ENCODE measurements at regions of chr3 and their contacts with region 1.

Region 1: GRCh38 chr3:144556392-144556791 is 584.8 kb downstream of the DIPK2A start:
- DNase-seq: no peak
- H3K4me3 ChIP-seq: no peak overlapping the region
- H3K27ac ChIP-seq: no peak overlapping the region
- H3K4me1 ChIP-seq: no peaks in the 10 kb centered on the region
- H3K27me3 ChIP-seq: no peaks in the 10 kb centered on the region
- CTCF ChIP-seq: no peak
- POLR2A ChIP-seq: no peak

Region 2: DNA sequence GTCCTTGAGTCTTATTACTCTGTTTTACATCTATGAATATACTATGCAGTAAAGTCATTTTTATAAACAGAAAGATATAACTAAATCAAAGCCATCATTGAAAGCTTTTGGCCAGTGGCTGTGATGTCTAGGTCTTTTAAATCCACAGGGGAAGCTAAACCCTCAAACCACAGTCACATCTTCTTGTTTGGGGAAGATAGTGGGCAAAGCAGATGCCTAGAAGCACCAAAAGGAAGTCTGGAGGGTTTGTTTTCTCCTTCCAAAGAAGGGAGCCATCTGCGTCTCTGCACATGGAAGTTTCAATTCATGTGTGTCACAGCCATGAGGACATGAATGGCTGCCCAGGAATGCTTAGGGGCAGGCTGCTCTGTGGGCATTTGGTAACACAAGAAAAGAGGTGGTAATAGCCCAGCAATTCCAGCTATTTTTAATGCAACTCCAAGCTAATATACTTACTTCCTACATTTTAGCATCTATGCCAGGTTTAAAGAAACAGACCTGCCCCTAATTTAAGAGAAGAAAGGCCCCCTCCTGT is 1030.3 kb before region 1 on chr3:
- CTCF ChIA-PET with region 1: no interaction called
- POLR2A ChIA-PET with region 1: no interaction called
- dilution Hi-C with region 1: no loop called
- intact Hi-C with region 1: no loop called
- DNase-seq: no peak
- H3K4me3 ChIP-seq: no peak overlapping the region
- H3K27ac ChIP-seq: no peak overlapping the region
- H3K4me1 ChIP-seq: no peaks in the 10 kb centered on the region
- H3K27me3 ChIP-seq: no peaks in the 10 kb centered on the region
- CTCF ChIP-seq: no peak
- POLR2A ChIP-seq: no peak

Region 3: DNA sequence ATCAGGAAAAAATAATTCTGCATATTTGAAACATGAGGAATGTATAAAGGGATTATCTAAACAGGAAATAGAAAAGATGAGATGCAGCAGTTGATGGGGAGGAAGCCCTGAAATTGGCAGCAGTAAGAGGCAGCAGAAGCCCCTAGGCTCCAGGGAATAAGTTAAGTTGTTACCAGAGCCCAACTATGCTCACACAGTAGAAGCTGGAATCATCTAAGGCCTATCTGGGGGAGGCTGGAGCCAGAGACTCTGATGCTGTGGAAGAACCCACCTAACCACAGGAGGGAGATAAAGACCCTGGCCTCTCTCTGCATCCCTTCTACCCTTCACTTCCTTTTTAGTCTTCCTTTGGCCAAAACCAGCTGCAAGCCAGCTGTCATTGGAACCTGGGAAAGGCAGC is 65.1 kb before region 1 on chr3:
- CTCF ChIA-PET with region 1: no interaction called
- POLR2A ChIA-PET with region 1: no interaction called
- dilution Hi-C with region 1: no loop called
- intact Hi-C with region 1: no loop called
- DNase-seq: no peak
- H3K4me3 ChIP-seq: no peak overlapping the region
- H3K27ac ChIP-seq: no peak overlapping the region
- H3K4me1 ChIP-seq: no peaks in the 10 kb centered on the region
- H3K27me3 ChIP-seq: no peaks in the 10 kb centered on the region
- CTCF ChIP-seq: no peak
- POLR2A ChIP-seq: no peak

Region 4: GRCh38 chr3:144529566-144529965 is 26.8 kb before region 1 on chr3:
- CTCF ChIA-PET with region 1: no interaction called
- POLR2A ChIA-PET with region 1: no interaction called
- dilution Hi-C with region 1: no loop called
- intact Hi-C with region 1: loop called (anchors 1 kb)
- DNase-seq: no peak
- H3K4me3 ChIP-seq: no peak overlapping the region
- H3K27ac ChIP-seq: no peak overlapping the region
- H3K4me1 ChIP-seq: no peaks in the 10 kb centered on the region
- H3K27me3 ChIP-seq: no peaks in the 10 kb centered on the region
- CTCF ChIP-seq: no peak
- POLR2A ChIP-seq: no peak